Aorta (tissue), 5 donors: ENCODE measurements at regions of chr1 and their contacts with region 1.

Region 1: DNA sequence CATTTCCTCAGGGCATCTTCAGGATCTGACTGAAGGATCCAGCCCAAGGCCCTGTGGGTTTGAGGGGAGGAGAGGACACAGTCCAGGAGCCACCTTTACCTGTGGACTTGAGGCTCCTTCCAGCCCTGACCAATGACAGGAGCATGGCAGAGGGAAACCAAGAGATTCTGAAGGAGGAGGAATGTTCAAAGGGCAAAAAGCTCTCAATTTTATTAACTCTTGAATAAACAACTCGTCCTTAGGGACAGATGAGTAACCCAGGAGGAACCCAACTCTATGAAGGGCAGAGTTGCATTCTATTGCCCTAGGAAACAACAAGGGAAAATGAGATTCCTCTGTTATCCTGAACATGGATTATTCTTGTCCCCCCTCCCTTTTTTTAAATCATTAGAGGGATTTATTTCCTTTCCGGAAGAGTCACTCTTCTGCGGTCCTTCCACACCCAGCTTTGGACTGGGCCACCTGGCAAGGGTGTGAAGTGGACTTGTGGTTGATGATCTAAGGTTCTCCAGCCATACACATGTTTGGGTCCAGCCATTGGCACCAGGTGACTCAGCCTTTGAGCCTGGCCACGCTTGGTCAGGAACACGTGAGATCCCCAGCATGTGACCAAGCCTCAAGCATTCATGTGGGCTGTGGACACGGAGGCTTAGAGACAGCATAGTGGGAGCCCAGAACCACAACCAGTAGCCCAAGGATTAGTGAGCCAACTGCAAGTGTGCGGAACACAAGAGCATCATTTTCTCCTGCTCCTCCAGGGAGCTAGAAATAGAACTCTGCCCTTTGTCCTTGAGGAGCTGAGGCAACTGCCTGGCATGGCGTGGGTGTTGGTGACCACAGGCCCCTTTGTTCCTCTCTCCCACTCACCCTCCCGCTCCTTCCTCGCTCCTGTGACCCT is 49.9 kb downstream of the NENF start:
- DNase-seq: peak in 1 of 2 donors; percentile 73
- ATAC-seq: no peak
- H3K4me3 ChIP-seq: no peak overlapping the region
- H3K27ac ChIP-seq: peak overlapping the region in 1 of 2 donors; percentile 35
- H3K4me1 ChIP-seq: peaks cover 0 to 3% of the 10 kb centered on the region in 2 donors
- H3K27me3 ChIP-seq: no peaks in the 10 kb centered on the region

Region 2: GRCh38 chr1:212608209-212608955 is 125.7 kb after region 1 on chr1 and contains the start of gene ATF3:
- intact Hi-C with region 1: loop called (anchors 2 to 5 kb)
- DNase-seq: peak; percentile 100
- ATAC-seq: peak; percentile 96
- H3K4me3 ChIP-seq: peak within 1 kb of the TSS; percentile 87 to 92
- H3K27ac ChIP-seq: peak within 1 kb of the TSS; percentile 81 to 92
- H3K4me1 ChIP-seq: peaks cover 9 to 13% of the 10 kb centered on the region in 2 donors
- H3K27me3 ChIP-seq: peaks cover 0 to 2% of the 10 kb centered on the region in 2 donors
- total RNA-seq, gene ATF3: 28.1 to 265 TPM

Region 3: GRCh38 chr1:212629450-212630157 is 147.0 kb after region 1 on chr1:
- intact Hi-C with region 1: loop called in 1 of 2 experiments (anchors 5 kb)
- DNase-seq: no peak
- ATAC-seq: no peak
- H3K4me3 ChIP-seq: no peak overlapping the region
- H3K27ac ChIP-seq: no peak overlapping the region
- H3K4me1 ChIP-seq: no peaks in the 10 kb centered on the region
- H3K27me3 ChIP-seq: no peaks in the 10 kb centered on the region